Caco-2 (cell line): ENCODE measurements at regions of chr15 and their contacts with region 1.

Region 1: GRCh38 chr15:27017168-27017809 is 46.3 kb downstream of the GABRG3 start:
- DNase-seq: peak; percentile 76 to 84
- H3K4me3 ChIP-seq: no peak overlapping the region
- H3K4me3 Mint-ChIP-seq: no peak overlapping the region
- H3K27ac Mint-ChIP-seq: no peak overlapping the region
- H3K4me1 ChIP-seq: no peaks in the 10 kb centered on the region
- H3K4me1 Mint-ChIP-seq: no peaks in the 10 kb centered on the region
- H3K27me3 ChIP-seq: no peaks in the 10 kb centered on the region
- H3K27me3 Mint-ChIP-seq: peaks cover 16% of the 10 kb centered on the region
- CTCF ChIP-seq: peak; percentile 91 to 96

Region 2: GRCh38 chr15:25883463-25884259 is 1133.6 kb before region 1 on chr15:
- CTCF ChIA-PET with region 1: no interaction called
- POLR2A ChIA-PET with region 1: no interaction called
- intact Hi-C with region 1: no loop called
- DNase-seq: peak; percentile 59 to 76
- H3K4me3 ChIP-seq: no peak overlapping the region
- H3K4me3 Mint-ChIP-seq: peak overlapping the region; percentile 54
- H3K27ac Mint-ChIP-seq: peak overlapping the region; percentile 75
- H3K4me1 ChIP-seq: peaks cover 59% of the 10 kb centered on the region
- H3K4me1 Mint-ChIP-seq: peaks cover 48% of the 10 kb centered on the region
- H3K27me3 ChIP-seq: no peaks in the 10 kb centered on the region
- H3K27me3 Mint-ChIP-seq: no peaks in the 10 kb centered on the region
- CTCF ChIP-seq: no peak

Region 3: GRCh38 chr15:26889298-26889898 is 127.9 kb before region 1 on chr15:
- CTCF ChIA-PET with region 1: interaction called, 7 read pairs
- POLR2A ChIA-PET with region 1: no interaction called
- intact Hi-C with region 1: loop called (anchors 1 kb)
- DNase-seq: peak in 1 of 2 experiments; percentile 55
- H3K4me3 ChIP-seq: no peak overlapping the region
- H3K4me3 Mint-ChIP-seq: no peak overlapping the region
- H3K27ac Mint-ChIP-seq: no peak overlapping the region
- H3K4me1 ChIP-seq: no peaks in the 10 kb centered on the region
- H3K4me1 Mint-ChIP-seq: no peaks in the 10 kb centered on the region
- H3K27me3 ChIP-seq: no peaks in the 10 kb centered on the region
- H3K27me3 Mint-ChIP-seq: peaks cover 2% of the 10 kb centered on the region
- CTCF ChIP-seq: peak in 1 of 2 experiments; percentile 42

Region 4: GRCh38 chr15:26974120-26974780 is 43.0 kb before region 1 on chr15:
- CTCF ChIA-PET with region 1: no interaction called
- POLR2A ChIA-PET with region 1: no interaction called
- intact Hi-C with region 1: loop called (anchors 1 kb)
- DNase-seq: peak in 1 of 2 experiments; percentile 30
- H3K4me3 ChIP-seq: no peak overlapping the region
- H3K4me3 Mint-ChIP-seq: no peak overlapping the region
- H3K27ac Mint-ChIP-seq: no peak overlapping the region
- H3K4me1 ChIP-seq: no peaks in the 10 kb centered on the region
- H3K4me1 Mint-ChIP-seq: no peaks in the 10 kb centered on the region
- H3K27me3 ChIP-seq: no peaks in the 10 kb centered on the region
- H3K27me3 Mint-ChIP-seq: no peaks in the 10 kb centered on the region
- CTCF ChIP-seq: peak in 1 of 2 experiments; percentile 39